Right cardiac atrium (tissue), 5 donors: ENCODE measurements at regions of chr15 and their contacts with region 1.

Region 1: DNA sequence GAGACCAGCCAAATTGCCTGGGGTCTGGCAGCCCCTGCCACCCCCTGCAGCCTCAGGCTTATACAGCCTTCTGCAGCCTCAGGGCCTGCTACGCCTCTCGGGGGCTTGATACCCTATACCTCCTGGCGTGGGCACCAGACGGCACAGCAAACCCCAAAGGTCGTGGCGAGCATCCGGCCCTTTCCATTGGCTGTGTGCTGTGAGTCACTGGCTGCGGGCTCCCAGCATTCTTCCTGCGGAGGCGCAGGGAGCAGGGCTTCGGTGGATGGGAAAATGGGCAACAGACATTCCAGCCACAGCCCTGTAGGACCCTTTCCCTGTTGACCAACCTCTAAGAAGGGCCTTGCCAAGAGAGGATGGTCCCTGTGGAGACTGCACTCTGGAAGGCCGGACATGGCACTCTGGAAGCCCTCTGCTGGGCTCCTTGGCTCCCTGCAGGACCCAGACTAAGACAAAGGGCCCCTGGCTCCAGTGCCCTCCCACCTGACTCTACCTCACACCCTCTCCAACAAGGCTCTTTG is 59.6 kb downstream of the ITGA11 start:
- DNase-seq: peak in 2 of 3 donors; percentile 62 to 70
- ATAC-seq: peak; percentile 39 to 42
- H3K4me3 ChIP-seq: no peak overlapping the region
- H3K27ac ChIP-seq: no peak overlapping the region
- H3K4me1 ChIP-seq: peaks cover 6% of the 10 kb centered on the region
- H3K27me3 ChIP-seq: no peaks in the 10 kb centered on the region

Region 2: GRCh38 chr15:68032672-68033071 is 339.7 kb before region 1 on chr15:
- intact Hi-C with region 1: no loop called
- DNase-seq: no peak
- ATAC-seq: no peak
- H3K4me3 ChIP-seq: no peak overlapping the region
- H3K27ac ChIP-seq: no peak overlapping the region
- H3K4me1 ChIP-seq: no peaks in the 10 kb centered on the region
- H3K27me3 ChIP-seq: no peaks in the 10 kb centered on the region

Region 3: GRCh38 chr15:68252925-68253534 is 119.3 kb before region 1 on chr15:
- intact Hi-C with region 1: loop called in 1 of 4 experiments (anchors 5 kb)
- DNase-seq: no peak
- ATAC-seq: peak; percentile 43 to 52
- H3K4me3 ChIP-seq: no peak overlapping the region
- H3K27ac ChIP-seq: no peak overlapping the region
- H3K4me1 ChIP-seq: no peaks in the 10 kb centered on the region
- H3K27me3 ChIP-seq: no peaks in the 10 kb centered on the region